Esophagus muscularis mucosa (tissue), 4 donors: ENCODE measurements at regions of chr16 and their contacts with region 1.

Region 1: DNA sequence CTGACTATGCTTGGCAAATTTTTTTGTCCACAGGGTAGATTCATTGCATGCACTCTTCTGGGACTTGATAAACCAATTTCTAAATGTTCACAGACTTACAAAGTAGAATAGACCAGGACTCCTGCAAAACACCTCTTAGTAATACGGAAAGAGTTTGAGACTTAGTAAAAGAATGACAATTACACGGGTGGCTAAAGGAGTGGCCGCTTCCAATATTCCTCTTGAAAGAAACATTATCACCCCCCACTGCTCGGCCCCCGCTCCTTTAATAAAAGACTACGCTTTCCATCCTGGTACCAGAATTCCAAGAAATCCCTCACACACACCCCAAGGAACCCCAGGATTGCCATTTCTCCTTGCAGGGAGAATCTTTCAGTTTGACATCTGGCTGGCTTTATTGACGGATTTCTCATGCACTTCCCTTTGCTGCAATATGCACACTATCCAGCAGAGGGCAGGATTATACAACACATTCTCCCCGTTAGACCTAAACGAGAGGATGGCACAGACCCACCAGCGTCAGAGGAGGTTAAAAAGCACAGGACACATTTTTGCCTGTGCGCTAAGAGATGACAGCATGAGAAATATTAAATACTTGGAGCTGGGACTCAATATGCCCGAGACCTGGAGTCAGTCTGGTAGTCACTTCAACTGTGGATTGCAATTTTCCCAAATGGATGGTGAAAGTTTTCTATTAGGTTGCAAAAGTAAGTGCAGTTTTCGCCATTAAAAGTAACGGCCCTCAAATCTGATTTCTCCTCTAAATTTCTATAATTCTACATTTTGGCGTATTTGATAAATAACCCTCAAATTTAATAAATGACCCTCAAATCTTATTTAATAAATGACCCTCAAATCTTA is 46.6 kb upstream of the NUDT7 start:
- DNase-seq: peak; percentile 95
- H3K4me3 ChIP-seq: no peak overlapping the region
- H3K27ac ChIP-seq: no peak overlapping the region
- H3K4me1 ChIP-seq: peaks cover 0 to 11% (median 2%) of the 10 kb centered on the region in 4 donors
- H3K27me3 ChIP-seq: peaks cover 0 to 13% (median 0%) of the 10 kb centered on the region in 4 donors
- CTCF ChIP-seq: peak; percentile 92 to 93 (median 92)
- EP300 ChIP-seq: no peak
- POLR2A ChIP-seq: no peak

Region 2: GRCh38 chr16:76963614-76964315 is 711.9 kb before region 1 on chr16:
- intact Hi-C with region 1: no loop called
- DNase-seq: no peak
- H3K4me3 ChIP-seq: no peak overlapping the region
- H3K27ac ChIP-seq: no peak overlapping the region
- H3K4me1 ChIP-seq: no peaks in the 10 kb centered on the region
- H3K27me3 ChIP-seq: no peaks in the 10 kb centered on the region
- CTCF ChIP-seq: no peak
- EP300 ChIP-seq: no peak
- POLR2A ChIP-seq: no peak

Region 3: GRCh38 chr16:77971306-77972271 is 295.9 kb after region 1 on chr16:
- intact Hi-C with region 1: loop called (anchors 1 kb)
- DNase-seq: no peak
- H3K4me3 ChIP-seq: no peak overlapping the region
- H3K27ac ChIP-seq: no peak overlapping the region
- H3K4me1 ChIP-seq: no peaks in the 10 kb centered on the region
- H3K27me3 ChIP-seq: peaks cover 0 to 24% (median 0%) of the 10 kb centered on the region in 4 donors
- CTCF ChIP-seq: peak; percentile 70 to 80 (median 77)
- EP300 ChIP-seq: no peak
- POLR2A ChIP-seq: no peak

Region 4: GRCh38 chr16:78002915-78003538 is 327.3 kb after region 1 on chr16:
- intact Hi-C with region 1: loop called (anchors 2 kb)
- DNase-seq: peak; percentile 93
- H3K4me3 ChIP-seq: no peak overlapping the region
- H3K27ac ChIP-seq: no peak overlapping the region
- H3K4me1 ChIP-seq: peaks cover 0 to 6% (median 3%) of the 10 kb centered on the region in 4 donors
- H3K27me3 ChIP-seq: peaks cover 0 to 4% (median 0%) of the 10 kb centered on the region in 4 donors
- CTCF ChIP-seq: peak; percentile 66 to 90 (median 71)
- EP300 ChIP-seq: no peak
- POLR2A ChIP-seq: no peak